ENCODE measurements at regions of chr3 and their contacts with region 1.

Region 1: DNA sequence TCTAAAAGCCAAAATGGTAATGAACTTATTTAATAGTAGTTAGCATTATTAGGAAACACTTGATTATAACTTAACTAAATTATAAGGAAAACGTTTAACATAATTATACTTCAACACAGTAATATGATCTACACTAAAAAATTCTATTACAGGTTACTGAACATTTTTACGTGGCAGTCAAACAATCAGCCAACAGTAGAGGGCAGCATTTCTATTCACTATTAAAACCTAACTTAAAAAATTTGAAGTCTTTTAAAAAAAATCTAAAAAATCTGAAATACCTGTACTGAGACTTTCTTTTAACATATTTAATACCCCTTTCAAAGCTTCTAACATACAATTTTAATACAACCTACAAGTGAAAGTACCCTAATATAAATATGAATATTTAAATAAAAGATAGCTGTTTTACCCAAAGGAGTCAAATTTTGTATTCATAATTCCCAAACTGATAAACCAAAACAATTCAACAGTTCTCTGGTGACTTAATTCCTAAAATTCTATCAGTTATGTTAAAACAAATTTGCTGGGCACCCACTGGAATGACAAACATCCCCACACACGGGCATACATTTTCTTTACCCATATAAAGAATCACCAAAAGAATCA is 41.5 kb downstream of the DLG1 start:
- DNase-seq: no peak
- H3K4me3 ChIP-seq: no peak overlapping the region
- H3K27ac ChIP-seq: no peak overlapping the region
- H3K4me1 ChIP-seq: peaks cover 0 to 2% (median 0%) of the 10 kb centered on the region in 4 experiments; a peak in 1 of 7 replicates
- H3K27me3 ChIP-seq: no peaks in the 10 kb centered on the region
- CTCF ChIP-seq: peak in 2 of 3 experiments; percentile 16 to 29; a peak in 2 of 4 replicates
- EP300 ChIP-seq: no peak
- POLR2A ChIP-seq: no peak
- RAD21 ChIP-seq: peak in 1 of 2 experiments; percentile 49; a peak in 3 of 4 replicates

Region 2: GRCh38 chr3:196932600-196932999 is 324.3 kb before region 1 on chr3:
- CTCF ChIA-PET with region 1: no interaction called
- POLR2A ChIA-PET with region 1: no interaction called
- DNase-seq: no peak
- H3K4me3 ChIP-seq: no peak overlapping the region
- H3K27ac ChIP-seq: no peak overlapping the region
- H3K4me1 ChIP-seq: no peaks in the 10 kb centered on the region
- H3K27me3 ChIP-seq: no peaks in the 10 kb centered on the region
- CTCF ChIP-seq: no peak
- EP300 ChIP-seq: no peak
- POLR2A ChIP-seq: no peak
- RAD21 ChIP-seq: no peak

Region 3: GRCh38 chr3:197068077-197068476 is 188.9 kb before region 1 on chr3:
- CTCF ChIA-PET with region 1: interaction called, 10 read pairs
- POLR2A ChIA-PET with region 1: no interaction called
- DNase-seq: no peak
- H3K4me3 ChIP-seq: no peak overlapping the region
- H3K27ac ChIP-seq: no peak overlapping the region
- H3K4me1 ChIP-seq: no peaks in the 10 kb centered on the region
- H3K27me3 ChIP-seq: no peaks in the 10 kb centered on the region
- CTCF ChIP-seq: no peak
- EP300 ChIP-seq: no peak
- POLR2A ChIP-seq: no peak
- RAD21 ChIP-seq: no peak

Region 4: DNA sequence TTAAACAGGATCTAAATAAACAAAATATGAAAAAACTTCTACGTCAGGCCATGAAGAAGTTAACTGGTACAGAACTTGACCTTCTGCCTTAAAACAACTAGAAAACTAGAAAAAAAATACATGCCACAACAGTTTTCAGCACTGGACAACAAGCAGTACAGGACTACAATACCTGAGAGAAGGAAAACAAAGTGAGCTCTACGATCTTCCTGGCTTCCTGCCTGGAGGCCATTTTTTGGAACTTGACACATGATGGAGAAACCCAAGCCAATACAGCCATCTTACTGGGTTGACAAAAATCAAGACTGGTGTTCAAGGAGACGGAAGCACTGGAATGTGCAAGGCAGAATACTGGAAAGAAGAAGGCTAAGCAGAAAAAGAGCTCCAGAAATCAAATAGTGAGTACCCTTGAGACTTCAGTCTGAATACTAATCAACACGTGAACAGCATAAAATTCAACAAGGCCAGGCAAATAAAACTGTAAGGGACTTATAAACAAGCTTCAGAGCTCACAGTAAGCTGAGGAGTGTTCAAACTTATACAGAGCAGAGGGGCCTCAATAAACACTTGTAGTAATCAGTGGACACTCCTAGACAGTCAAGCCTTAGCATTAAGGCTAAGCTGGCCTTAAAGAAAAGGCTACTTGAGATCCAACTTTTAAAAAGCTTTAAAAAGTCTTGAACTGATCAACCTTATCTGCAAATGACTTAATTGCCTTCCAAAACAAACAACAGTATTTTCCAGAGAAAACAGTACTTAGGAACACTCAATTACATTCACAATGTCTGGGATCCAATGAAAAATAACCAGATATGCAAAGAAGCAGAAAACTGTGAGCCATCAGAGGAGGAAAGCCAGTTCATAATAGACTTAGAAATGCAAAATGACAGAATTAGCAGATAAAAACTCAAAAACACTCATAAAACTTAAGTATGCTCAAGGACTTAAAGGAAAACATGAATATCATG is 21.7 kb before region 1 on chr3:
- CTCF ChIA-PET with region 1: interaction called, 13 read pairs
- POLR2A ChIA-PET with region 1: no interaction called
- DNase-seq: no peak
- H3K4me3 ChIP-seq: no peak overlapping the region
- H3K27ac ChIP-seq: no peak overlapping the region
- H3K4me1 ChIP-seq: peaks cover 3 to 15% (median 6%) of the 10 kb centered on the region in 4 experiments; a peak in 6 of 7 replicates
- H3K27me3 ChIP-seq: no peaks in the 10 kb centered on the region
- CTCF ChIP-seq: no peak
- EP300 ChIP-seq: no peak
- POLR2A ChIP-seq: no peak
- RAD21 ChIP-seq: no peak

Region 5: GRCh38 chr3:197268294-197268693 is 11.4 kb after region 1 on chr3:
- CTCF ChIA-PET with region 1: interaction called, 19 read pairs
- POLR2A ChIA-PET with region 1: interaction called, 6 read pairs
- DNase-seq: no peak
- H3K4me3 ChIP-seq: no peak overlapping the region
- H3K27ac ChIP-seq: no peak overlapping the region
- H3K4me1 ChIP-seq: peaks cover 0 to 3% (median 0%) of the 10 kb centered on the region in 4 experiments; a peak in 1 of 7 replicates
- H3K27me3 ChIP-seq: no peaks in the 10 kb centered on the region
- CTCF ChIP-seq: no peak
- EP300 ChIP-seq: no peak
- POLR2A ChIP-seq: no peak
- RAD21 ChIP-seq: no peak

Region 6: GRCh38 chr3:197289726-197290125 is 32.8 kb after region 1 on chr3:
- CTCF ChIA-PET with region 1: no interaction called
- POLR2A ChIA-PET with region 1: no interaction called
- DNase-seq: no peak
- H3K4me3 ChIP-seq: no peak overlapping the region
- H3K27ac ChIP-seq: no peak overlapping the region
- H3K4me1 ChIP-seq: no peaks in the 10 kb centered on the region
- H3K27me3 ChIP-seq: no peaks in the 10 kb centered on the region
- CTCF ChIP-seq: no peak
- EP300 ChIP-seq: no peak
- POLR2A ChIP-seq: no peak
- RAD21 ChIP-seq: no peak

Region 7: DNA sequence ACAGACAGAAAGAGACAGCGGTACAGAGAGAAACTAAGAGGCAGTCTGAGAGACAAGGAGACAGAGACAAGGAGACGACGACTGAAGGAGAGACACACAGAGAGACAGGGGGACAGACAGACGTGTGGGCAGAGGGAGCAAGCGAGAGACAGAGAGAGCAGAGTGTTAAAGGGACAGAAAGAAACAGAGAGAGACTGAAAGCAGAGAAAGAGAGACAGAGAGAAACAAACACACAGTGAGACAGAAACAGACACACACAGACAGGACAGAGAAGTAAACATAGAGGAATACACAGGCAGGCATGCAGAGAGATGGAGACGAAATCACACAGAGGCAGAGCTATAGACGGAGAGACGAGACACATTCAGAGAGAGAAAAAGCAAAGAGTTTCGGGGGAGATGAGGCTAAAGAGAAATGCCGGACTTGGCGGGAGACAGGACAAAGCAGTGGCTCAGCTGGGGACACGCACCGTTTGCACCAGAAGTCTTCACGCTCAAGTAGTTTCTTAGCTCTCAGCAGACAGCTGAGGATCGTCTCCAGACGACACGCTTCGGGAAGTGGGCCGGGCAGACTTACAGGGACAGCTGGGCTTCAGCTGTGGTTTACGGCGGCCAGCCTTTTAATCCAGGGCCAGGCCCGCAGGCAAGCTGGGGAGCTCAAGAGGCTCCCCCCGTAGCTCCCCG is 97.5 kb after region 1 on chr3:
- CTCF ChIA-PET with region 1: interaction called, 10 read pairs
- POLR2A ChIA-PET with region 1: no interaction called
- DNase-seq: no peak
- H3K4me3 ChIP-seq: no peak overlapping the region
- H3K27ac ChIP-seq: no peak overlapping the region
- H3K4me1 ChIP-seq: peaks cover 0 to 6% (median 2%) of the 10 kb centered on the region in 4 experiments; a peak in 4 of 7 replicates
- H3K27me3 ChIP-seq: no peaks in the 10 kb centered on the region; a peak in 1 of 7 replicates
- CTCF ChIP-seq: no peak
- EP300 ChIP-seq: no peak
- POLR2A ChIP-seq: no peak
- RAD21 ChIP-seq: no peak

Region 8: DNA sequence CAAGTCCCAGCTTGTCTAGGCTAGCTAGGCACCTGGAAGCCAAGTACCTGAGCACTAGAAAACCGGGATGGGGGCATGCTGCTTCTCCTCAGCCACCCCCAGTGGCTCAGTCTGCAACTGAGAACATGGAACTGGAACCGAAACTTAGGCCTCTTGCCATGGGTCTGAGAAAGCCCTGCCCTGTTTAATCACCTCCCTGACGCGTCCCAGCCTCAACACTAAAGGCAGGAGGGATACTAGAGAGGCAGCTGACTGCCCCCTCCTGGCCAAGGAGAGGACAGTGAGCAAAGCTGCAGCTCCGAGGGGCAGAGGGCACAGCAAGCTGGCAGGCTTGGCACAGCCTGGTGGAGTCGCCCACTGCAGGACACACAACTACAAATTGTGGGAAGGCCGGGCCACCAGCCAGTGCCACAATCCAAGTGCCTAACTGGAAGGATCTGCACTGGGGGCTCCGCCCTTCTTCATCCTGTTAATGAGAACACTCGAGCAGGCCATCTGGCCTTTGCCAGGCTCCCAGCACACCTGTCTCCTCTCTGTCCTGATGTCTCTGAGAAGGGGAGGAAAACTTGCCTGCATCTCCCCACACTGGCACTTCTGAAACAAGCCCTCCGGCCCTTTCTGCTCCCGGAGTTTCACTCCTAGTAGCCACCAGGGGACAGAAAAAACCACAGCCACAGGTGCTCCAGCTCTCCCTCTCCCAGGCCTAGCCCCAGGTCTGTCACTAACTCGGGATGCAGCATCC is 245.1 kb after region 1 on chr3:
- CTCF ChIA-PET with region 1: interaction called, 27 read pairs
- POLR2A ChIA-PET with region 1: no interaction called
- DNase-seq: peak; percentile 49 to 78
- H3K4me3 ChIP-seq: no peak overlapping the region
- H3K27ac ChIP-seq: no peak overlapping the region
- H3K4me1 ChIP-seq: no peaks in the 10 kb centered on the region
- H3K27me3 ChIP-seq: no peaks in the 10 kb centered on the region
- CTCF ChIP-seq: peak in 2 of 3 experiments; percentile 89 to 91; a peak in 3 of 4 replicates
- EP300 ChIP-seq: no peak
- POLR2A ChIP-seq: no peak
- RAD21 ChIP-seq: peak; percentile 96 to 97